Naive thymus-derived CD8-positive, alpha-beta T cell (primary cell): ENCODE measurements at regions of chr5 and their contacts with region 1.

Region 1: GRCh38 chr5:69234457-69235268 is at the start of gene CDK7:
- DNase-seq: peak; percentile 83 to 94 (median 90)
- ATAC-seq: peak; percentile 99 to 100
- H3K4me3 Mint-ChIP-seq: peak within 1 kb of the TSS; percentile 92 to 99 (median 97)
- H3K27ac Mint-ChIP-seq: peak within 1 kb of the TSS; percentile 88 to 97 (median 94)
- H3K4me1 Mint-ChIP-seq: peaks cover 15 to 50% (median 43%) of the 10 kb centered on the region in 4 donors
- H3K27me3 Mint-ChIP-seq: no peaks in the 10 kb centered on the region
- polyA plus RNA-seq, gene CDK7: 18.2 to 20.8 (median 19.4) TPM

Region 2: DNA sequence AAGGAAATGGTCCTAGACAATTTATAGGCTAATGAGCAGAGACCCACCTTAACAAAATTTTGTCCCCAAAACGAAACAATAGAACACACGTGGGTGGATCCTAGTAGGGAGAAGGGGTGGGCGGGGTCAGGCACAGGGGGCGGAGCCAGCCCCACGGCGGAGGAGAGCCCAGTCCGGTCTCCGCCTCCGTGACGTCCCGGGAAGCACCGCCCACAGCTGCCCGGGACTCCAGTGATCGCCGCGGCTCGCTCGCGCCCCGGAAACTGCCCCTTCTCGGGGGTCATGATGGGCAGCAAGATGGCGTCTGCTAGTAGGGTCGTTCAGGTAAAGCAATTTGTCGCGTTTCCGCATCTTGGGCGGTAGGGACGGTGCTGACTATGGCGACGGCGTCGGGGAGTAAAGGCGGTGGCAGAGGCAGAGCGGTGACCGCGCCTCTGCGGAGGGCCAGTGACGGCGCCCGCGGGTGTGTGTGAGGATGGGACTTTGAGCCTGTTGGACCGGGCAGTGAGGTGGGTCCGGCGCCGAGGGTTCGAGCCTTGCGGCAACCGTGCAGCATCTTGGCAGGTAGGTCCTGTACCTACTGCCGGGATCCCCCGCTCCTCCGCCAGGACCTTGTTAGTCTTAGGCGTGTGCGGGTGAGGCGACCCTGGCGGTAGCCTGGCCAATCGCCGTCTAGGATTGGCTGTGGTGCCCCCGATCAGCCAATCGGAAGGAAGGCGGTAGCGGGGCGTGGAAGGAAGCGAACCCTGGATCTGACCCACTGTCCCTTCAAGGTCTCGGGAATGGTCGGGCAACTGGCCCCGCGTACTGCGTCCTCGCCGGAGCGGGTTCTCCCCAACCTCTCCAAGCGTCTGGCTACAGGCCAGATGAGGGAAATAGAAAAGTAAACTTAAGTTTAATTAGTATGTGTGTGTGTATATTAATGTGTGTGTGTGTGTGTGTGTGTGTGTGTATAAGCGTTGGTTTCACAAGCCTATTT is 16.8 kb before region 1 on chr5:
- POLR2A ChIA-PET with region 1: interaction called, 38 read pairs
- DNase-seq: peak; percentile 83 to 97 (median 92)
- ATAC-seq: peak; percentile 86 to 89
- H3K4me3 Mint-ChIP-seq: peak overlapping the region; percentile 96 to 100 (median 98)
- H3K27ac Mint-ChIP-seq: peak overlapping the region; percentile 96 to 100 (median 99)
- H3K4me1 Mint-ChIP-seq: peaks cover 6 to 31% (median 16%) of the 10 kb centered on the region in 4 donors
- H3K27me3 Mint-ChIP-seq: no peaks in the 10 kb centered on the region